ENCODE measurements at regions of chr3 and their contacts with region 1.

Region 1: GRCh38 chr3:66276705-66277274 is 56.0 kb downstream of the SLC25A26 start:
- DNase-seq: peak; percentile 42
- H3K4me3 ChIP-seq: no peak overlapping the region
- H3K27ac ChIP-seq: no peak overlapping the region
- H3K4me1 ChIP-seq: no peaks in the 10 kb centered on the region
- H3K27me3 ChIP-seq: no peaks in the 10 kb centered on the region
- CTCF ChIP-seq: peak; percentile 50 to 66

Region 2: GRCh38 chr3:66378256-66378823 is 101.5 kb after region 1 on chr3:
- CTCF ChIA-PET with region 1: no interaction called
- dilution Hi-C with region 1: no loop called
- in situ Hi-C with region 1: loop called in 1 of 2 experiments (anchors 25 kb)
- intact Hi-C with region 1: loop called (anchors 10 kb)
- DNase-seq: no peak
- H3K4me3 ChIP-seq: no peak overlapping the region
- H3K27ac ChIP-seq: no peak overlapping the region
- H3K4me1 ChIP-seq: no peaks in the 10 kb centered on the region
- H3K27me3 ChIP-seq: no peaks in the 10 kb centered on the region
- CTCF ChIP-seq: peak; percentile 37 to 56

Region 3: GRCh38 chr3:66407611-66408218 is 130.9 kb after region 1 on chr3:
- CTCF ChIA-PET with region 1: interaction called, 3 read pairs
- dilution Hi-C with region 1: no loop called
- in situ Hi-C with region 1: loop called in 1 of 2 experiments (anchors 5 kb)
- intact Hi-C with region 1: loop called (anchors 2 kb)
- DNase-seq: peak; percentile 34
- H3K4me3 ChIP-seq: no peak overlapping the region
- H3K27ac ChIP-seq: no peak overlapping the region
- H3K4me1 ChIP-seq: no peaks in the 10 kb centered on the region
- H3K27me3 ChIP-seq: no peaks in the 10 kb centered on the region
- CTCF ChIP-seq: peak; percentile 85 to 96

Region 4: GRCh38 chr3:66816090-66816761 is 539.4 kb after region 1 on chr3:
- CTCF ChIA-PET with region 1: no interaction called
- dilution Hi-C with region 1: no loop called
- in situ Hi-C with region 1: loop called (anchors 5 kb)
- intact Hi-C with region 1: loop called (anchors 1 kb)
- DNase-seq: peak; percentile 13
- H3K4me3 ChIP-seq: no peak overlapping the region
- H3K27ac ChIP-seq: no peak overlapping the region
- H3K4me1 ChIP-seq: no peaks in the 10 kb centered on the region
- H3K27me3 ChIP-seq: no peaks in the 10 kb centered on the region
- CTCF ChIP-seq: peak; percentile 19 to 57